ENCODE measurements at regions of chr11 and their contacts with region 1.

Region 1: GRCh38 chr11:27485930-27486773 is 13.6 kb upstream of the LGR4 start:
- DNase-seq: peak; percentile 75
- H3K4me3 ChIP-seq: no peak overlapping the region
- H3K27ac ChIP-seq: no peak overlapping the region
- H3K4me1 ChIP-seq: no peaks in the 10 kb centered on the region
- H3K27me3 ChIP-seq: no peaks in the 10 kb centered on the region
- CTCF ChIP-seq: peak; percentile 54 to 63
- POLR2A ChIP-seq: no peak

Region 2: DNA sequence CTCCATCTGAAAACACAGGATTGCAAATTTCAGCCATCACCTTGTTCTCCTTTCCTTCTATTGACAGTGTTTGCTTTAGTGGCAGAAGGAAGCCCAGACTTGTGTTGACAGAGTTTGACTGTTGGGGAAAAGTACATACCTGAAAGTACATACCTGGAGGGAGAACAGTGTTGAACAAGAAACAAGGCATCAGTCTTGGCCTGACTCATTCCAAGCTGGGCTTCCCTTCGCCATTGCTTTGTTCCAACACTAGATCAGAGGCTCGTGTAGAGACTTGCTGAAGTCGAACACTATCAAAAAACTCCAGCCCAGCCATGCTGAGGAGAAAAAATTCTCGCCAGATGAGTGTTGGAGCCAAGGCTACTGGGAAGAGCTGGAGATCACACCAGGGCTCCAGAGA is 312.1 kb before region 1 on chr11:
- CTCF ChIA-PET with region 1: interaction called, 12 read pairs
- POLR2A ChIA-PET with region 1: no interaction called
- dilution Hi-C with region 1: loop called (anchors 25 kb)
- intact Hi-C with region 1: no loop called
- DNase-seq: no peak
- H3K4me3 ChIP-seq: no peak overlapping the region
- H3K27ac ChIP-seq: no peak overlapping the region
- H3K4me1 ChIP-seq: no peaks in the 10 kb centered on the region
- H3K27me3 ChIP-seq: peaks cover 3 to 12% of the 10 kb centered on the region in 2 experiments
- CTCF ChIP-seq: no peak
- POLR2A ChIP-seq: no peak

Region 3: DNA sequence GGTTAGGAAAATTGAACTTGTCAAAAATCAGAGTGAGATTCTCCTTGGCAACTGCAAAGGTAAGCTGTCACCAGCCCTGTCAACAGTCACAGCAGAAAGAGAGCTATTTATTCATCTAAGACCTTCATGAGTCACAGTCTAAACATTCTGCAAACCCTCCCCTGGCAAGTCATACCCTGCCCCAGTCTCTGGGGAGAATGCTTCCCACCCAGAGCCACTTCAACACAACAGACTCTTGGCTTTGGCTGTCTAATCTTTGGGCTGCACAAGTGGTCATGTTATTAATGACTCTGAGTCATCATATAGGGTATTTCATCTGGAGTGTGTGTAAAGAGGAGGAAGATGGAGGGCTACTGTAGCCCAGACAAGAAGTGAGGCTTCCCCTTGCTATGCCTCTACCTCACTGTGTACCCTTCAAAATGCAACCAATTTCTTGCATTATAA is 276.6 kb before region 1 on chr11:
- CTCF ChIA-PET with region 1: interaction called, 36 read pairs
- POLR2A ChIA-PET with region 1: no interaction called
- dilution Hi-C with region 1: no loop called
- intact Hi-C with region 1: loop called (anchors 1 kb)
- DNase-seq: peak; percentile 64
- H3K4me3 ChIP-seq: no peak overlapping the region
- H3K27ac ChIP-seq: no peak overlapping the region
- H3K4me1 ChIP-seq: peaks cover 12% of the 10 kb centered on the region
- H3K27me3 ChIP-seq: peaks cover 68 to 71% of the 10 kb centered on the region in 2 experiments
- CTCF ChIP-seq: no peak
- POLR2A ChIP-seq: no peak

Region 4: DNA sequence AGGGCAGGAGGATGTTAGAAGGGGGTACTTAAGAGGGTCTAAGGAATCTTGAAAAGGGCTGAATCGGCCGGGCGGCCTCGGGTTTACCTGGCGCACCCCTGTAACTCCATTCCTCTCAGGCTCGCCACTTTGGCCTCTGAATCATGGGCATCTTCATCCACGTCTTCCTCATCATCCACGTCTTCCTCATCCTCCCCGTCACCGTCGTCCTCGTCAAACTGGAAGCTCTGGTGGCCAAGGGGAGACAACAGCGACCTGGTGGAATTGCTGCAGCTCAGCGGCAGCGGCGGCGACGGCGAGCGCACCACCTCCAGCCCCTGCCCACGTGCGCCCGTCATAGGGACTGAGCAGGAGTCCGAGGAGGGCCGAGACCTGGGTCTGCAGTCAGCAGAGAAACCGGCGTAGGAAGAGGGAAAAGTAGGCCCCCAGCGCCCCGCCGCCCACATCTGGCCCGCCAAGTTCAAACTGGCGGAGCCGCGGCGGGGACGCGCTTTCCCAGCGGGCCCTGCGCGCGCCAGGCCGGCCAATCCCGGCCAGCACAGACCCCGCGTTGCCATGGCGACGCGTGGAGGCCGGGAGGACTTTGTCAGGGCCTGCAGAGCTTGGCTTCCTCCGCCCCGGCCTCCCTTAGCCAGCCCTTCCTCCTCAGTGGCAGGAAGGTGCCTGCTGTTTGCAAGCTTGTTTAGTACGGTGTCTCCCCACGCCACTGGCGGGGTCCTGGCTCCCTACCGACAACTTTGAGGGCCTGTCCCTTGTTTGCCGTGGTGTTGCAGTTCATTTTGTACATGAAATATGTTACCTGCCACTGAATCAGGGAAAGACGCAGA is 123.2 kb before region 1 on chr11 and contains the start of gene CCDC34:
- CTCF ChIA-PET with region 1: interaction called, 8 read pairs
- POLR2A ChIA-PET with region 1: no interaction called
- dilution Hi-C with region 1: no loop called
- intact Hi-C with region 1: loop called (anchors 5 kb)
- DNase-seq: peak; percentile 90
- H3K4me3 ChIP-seq: peak within 1 kb of the TSS; percentile 50 to 93 (median 53)
- H3K27ac ChIP-seq: no peak within 1 kb of the TSS
- H3K4me1 ChIP-seq: peaks cover 8% of the 10 kb centered on the region
- H3K27me3 ChIP-seq: no peaks in the 10 kb centered on the region
- CTCF ChIP-seq: no peak
- POLR2A ChIP-seq: peak; percentile 77
- total RNA-seq, gene CCDC34: 11.4 and 11.8 TPM in 2 replicates

Region 5: GRCh38 chr11:27472398-27473016 is 13.6 kb before region 1 on chr11 and contains the start of gene LGR4:
- CTCF ChIA-PET with region 1: interaction called, 63 read pairs
- POLR2A ChIA-PET with region 1: no interaction called
- dilution Hi-C with region 1: no loop called
- intact Hi-C with region 1: no loop called
- DNase-seq: peak; percentile 96
- H3K4me3 ChIP-seq: peak within 1 kb of the TSS; percentile 44 to 94 (median 73)
- H3K27ac ChIP-seq: no peak within 1 kb of the TSS
- H3K4me1 ChIP-seq: peaks cover 14% of the 10 kb centered on the region
- H3K27me3 ChIP-seq: peaks cover 0 to 2% of the 10 kb centered on the region in 2 experiments
- CTCF ChIP-seq: no peak
- POLR2A ChIP-seq: peak; percentile 52
- total RNA-seq, gene LGR4: 2.6 and 3.1 TPM in 2 replicates

Region 6: DNA sequence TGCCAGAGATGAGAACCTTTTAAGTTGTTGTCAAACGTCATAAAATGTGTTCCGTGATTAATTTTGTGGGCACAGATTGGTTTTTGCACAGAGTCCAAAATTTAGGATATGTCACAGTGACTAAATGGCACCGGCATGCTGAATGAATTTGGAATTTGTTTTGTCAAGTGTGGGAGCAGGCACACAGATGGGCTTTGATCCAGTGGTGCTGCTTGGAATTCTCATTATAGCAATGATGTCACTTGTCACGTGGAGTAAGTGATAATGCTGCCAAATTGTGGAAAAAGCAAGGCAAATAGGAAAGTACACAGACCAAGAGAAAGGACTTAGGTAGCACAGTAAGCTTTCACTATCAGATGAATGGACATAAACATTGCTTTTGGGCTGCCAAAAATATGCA is 28.4 kb after region 1 on chr11:
- CTCF ChIA-PET with region 1: no interaction called
- POLR2A ChIA-PET with region 1: no interaction called
- dilution Hi-C with region 1: no loop called
- intact Hi-C with region 1: no loop called
- DNase-seq: no peak
- H3K4me3 ChIP-seq: no peak overlapping the region
- H3K27ac ChIP-seq: no peak overlapping the region
- H3K4me1 ChIP-seq: no peaks in the 10 kb centered on the region
- H3K27me3 ChIP-seq: no peaks in the 10 kb centered on the region
- CTCF ChIP-seq: no peak
- POLR2A ChIP-seq: no peak